Head of caudate nucleus (tissue), 42 donors: ENCODE measurements at regions of chr4 and their contacts with region 1.

Region 1: GRCh38 chr4:102449751-102450352 is 51.3 kb upstream of the NFKB1 start:
- DNase-seq: peak in 29 of 42 donors; percentile 14 to 78 (median 57)

Region 2: GRCh38 chr4:102129810-102130209 is 320.0 kb before region 1 on chr4:
- intact Hi-C with region 1: no loop called
- DNase-seq: no peak

Region 3: GRCh38 chr4:102196221-102196620 is 253.6 kb before region 1 on chr4:
- intact Hi-C with region 1: no loop called
- DNase-seq: no peak

Region 4: DNA sequence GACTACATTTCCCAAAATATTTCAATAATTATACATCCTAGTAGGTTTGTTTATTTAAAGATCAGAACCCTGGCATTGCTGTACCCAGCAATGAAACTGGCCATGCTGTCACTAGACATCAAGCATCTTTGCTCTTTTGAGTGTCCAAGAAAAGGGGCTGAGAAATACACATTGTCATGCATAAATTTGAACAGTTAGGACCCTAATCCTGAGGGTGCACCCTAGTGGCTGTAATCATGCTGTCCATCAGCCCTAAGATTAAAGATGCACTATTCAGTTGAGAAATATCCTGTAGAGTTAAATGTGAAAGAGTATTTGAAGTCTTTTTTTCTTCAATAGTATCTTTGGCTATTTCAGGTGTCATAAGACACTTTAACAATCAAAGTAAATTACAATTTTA is 160.2 kb after region 1 on chr4:
- intact Hi-C with region 1: loop called (anchors 10 kb)
- DNase-seq: peak in 1 of 42 donors; percentile 29

Region 5: DNA sequence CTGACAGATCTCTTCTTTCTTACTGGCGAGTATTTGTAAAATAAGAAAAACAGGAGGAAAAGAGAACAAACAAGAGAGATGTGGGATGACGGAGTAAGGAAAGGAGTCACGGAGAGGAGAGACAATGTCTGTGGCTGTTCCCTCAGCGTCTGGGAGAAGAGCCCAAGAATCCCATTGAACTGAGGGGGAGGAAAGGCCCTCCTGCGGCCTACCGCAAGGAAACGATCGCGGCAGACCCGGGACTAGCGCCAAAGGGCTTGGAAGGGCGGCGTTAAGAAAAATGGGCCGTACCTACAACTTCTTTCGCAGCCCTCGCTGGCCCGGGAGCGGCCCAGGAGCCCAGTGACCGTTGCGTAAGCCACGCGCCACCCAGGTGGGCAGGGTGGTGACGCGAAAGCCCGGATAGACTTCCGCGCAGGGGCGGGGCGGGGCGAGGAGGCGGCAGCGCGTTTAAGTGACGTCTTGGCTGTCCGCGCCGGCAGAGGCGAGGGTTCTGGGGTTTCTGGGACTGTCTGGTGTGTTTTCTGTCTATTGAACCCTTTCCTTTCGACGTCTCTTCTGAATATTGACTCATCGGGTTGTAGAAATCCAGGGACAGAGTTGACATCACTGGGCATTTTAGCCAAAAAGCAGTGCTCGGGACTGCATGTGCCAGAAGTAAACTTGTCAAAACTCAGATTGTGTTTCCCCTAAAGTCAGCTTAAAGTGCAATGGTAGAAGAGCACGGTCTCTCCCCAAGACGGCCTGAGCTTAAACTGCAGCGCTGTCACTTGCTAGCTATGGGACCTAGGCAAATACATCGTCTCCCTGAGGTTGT is 569.7 kb after region 1 on chr4 and contains the start of gene SLC9B1:
- intact Hi-C with region 1: loop called (anchors 10 kb)
- DNase-seq: peak; percentile 80 to 96 (median 90)